CD8-positive, alpha-beta memory T cell (primary cell): ENCODE measurements at regions of chr2 and their contacts with region 1.

Region 1: GRCh38 chr2:7725171-7725849 is 808.1 kb downstream of the RNF144A start:
- DNase-seq: peak; percentile 7 to 82 (median 37)
- H3K4me3 ChIP-seq: peak overlapping the region; percentile 65
- H3K4me3 Mint-ChIP-seq: peak overlapping the region; percentile 84 to 93 (median 89)
- H3K27ac ChIP-seq: peak overlapping the region; percentile 47
- H3K27ac Mint-ChIP-seq: peak overlapping the region; percentile 90 to 99 (median 96)
- H3K4me1 ChIP-seq: peaks cover 35% of the 10 kb centered on the region
- H3K4me1 Mint-ChIP-seq: peaks cover 69 to 88% (median 78%) of the 10 kb centered on the region in 3 donors
- H3K27me3 ChIP-seq: no peaks in the 10 kb centered on the region
- H3K27me3 Mint-ChIP-seq: no peaks in the 10 kb centered on the region

Region 2: DNA sequence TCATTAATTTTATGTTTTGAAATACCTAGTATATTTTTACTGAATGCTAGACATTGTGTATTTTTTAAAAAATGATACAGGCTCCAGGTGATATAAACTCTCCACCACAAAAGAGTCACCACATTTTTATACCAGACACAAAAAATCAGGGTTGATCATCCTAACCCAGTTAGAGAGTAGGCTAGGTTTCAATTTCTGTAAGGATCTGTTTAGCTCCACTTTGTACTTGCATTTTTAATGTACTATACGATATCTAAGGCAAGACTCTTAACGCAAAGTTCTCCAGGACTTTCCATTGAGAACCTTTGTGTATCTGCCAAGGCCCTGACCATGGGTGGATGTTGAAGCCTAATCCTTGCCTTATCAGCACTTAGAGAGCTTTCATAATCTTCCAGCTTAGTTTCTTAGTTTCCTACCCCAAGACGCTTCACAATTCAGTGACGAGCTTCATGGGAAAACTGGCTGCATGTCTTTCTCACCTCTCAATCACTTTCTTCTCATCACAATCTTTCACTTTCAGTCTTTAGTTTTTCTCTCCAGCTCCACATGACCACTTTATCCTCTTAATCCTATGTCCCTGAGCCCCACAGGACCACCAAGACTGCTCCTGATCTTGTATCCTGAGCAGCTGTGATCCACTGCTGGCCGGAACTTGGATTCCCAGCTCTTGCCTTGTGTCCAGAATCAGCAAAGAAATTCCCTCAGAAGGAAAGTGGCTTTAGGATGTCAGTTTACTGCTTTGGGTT is 172.3 kb before region 1 on chr2:
- CTCF ChIA-PET with region 1: no interaction called
- POLR2A ChIA-PET with region 1: no interaction called
- DNase-seq: no peak
- H3K4me3 ChIP-seq: peak overlapping the region; percentile 38
- H3K4me3 Mint-ChIP-seq: peak overlapping the region; percentile 13 to 72 (median 44)
- H3K27ac ChIP-seq: no peak overlapping the region
- H3K27ac Mint-ChIP-seq: peak overlapping the region in 6 of 8 donors; percentile 5 to 84 (median 46)
- H3K4me1 ChIP-seq: no peaks in the 10 kb centered on the region
- H3K4me1 Mint-ChIP-seq: peaks cover 12% of the 10 kb centered on the region in 3 donors
- H3K27me3 ChIP-seq: no peaks in the 10 kb centered on the region
- H3K27me3 Mint-ChIP-seq: no peaks in the 10 kb centered on the region

Region 3: GRCh38 chr2:7567646-7568045 is 157.7 kb before region 1 on chr2:
- CTCF ChIA-PET with region 1: interaction called, 20 read pairs
- POLR2A ChIA-PET with region 1: interaction called, 7 read pairs
- DNase-seq: peak in 4 of 5 donors; percentile 2 to 83 (median 71)
- H3K4me3 ChIP-seq: peak overlapping the region; percentile 11
- H3K4me3 Mint-ChIP-seq: peak overlapping the region in 6 of 7 donors; percentile 24 to 79 (median 64)
- H3K27ac ChIP-seq: no peak overlapping the region
- H3K27ac Mint-ChIP-seq: peak overlapping the region; percentile 55 to 96 (median 86)
- H3K4me1 ChIP-seq: peaks cover 48% of the 10 kb centered on the region
- H3K4me1 Mint-ChIP-seq: peaks cover 36 to 65% (median 53%) of the 10 kb centered on the region in 3 donors
- H3K27me3 ChIP-seq: no peaks in the 10 kb centered on the region
- H3K27me3 Mint-ChIP-seq: peaks cover 0 to 1% of the 10 kb centered on the region in 2 donors

Region 4: DNA sequence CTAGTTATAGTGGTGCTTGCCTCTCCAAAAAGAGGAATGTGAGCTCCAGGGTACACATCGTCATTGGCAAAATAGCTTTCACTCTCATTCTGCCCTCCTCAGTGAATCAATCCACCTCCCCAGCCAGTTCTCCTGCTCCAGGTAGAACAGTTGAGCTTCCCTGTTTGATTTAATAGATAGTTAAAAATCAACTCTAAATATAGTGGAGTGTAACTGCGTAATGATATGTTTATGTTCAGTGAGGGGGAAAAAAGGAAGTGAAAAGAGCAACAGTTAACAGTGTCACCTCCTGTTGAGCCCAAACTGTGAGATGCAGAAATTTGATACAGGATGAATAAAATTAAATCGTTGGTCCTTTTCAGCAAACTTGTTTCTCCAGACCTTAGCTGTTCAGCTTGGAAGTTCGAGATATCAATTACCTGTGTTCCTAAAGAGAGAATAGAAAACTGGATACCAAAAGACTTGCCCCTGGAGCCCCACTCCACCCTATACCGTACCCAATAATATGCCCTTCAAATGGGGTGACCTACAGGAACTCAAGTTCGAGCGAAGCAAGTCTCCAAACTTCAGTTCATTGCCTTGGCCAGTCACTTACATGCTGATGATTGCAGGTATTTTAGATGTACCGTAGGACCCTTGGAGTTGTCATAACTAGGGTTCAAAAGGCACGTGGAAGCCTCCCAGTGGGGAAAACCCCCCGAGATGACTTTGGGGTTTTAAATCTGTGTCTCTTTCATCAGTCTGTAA is 99.7 kb before region 1 on chr2:
- CTCF ChIA-PET with region 1: no interaction called
- POLR2A ChIA-PET with region 1: no interaction called
- DNase-seq: no peak
- H3K4me3 ChIP-seq: no peak overlapping the region
- H3K4me3 Mint-ChIP-seq: no peak overlapping the region
- H3K27ac ChIP-seq: no peak overlapping the region
- H3K27ac Mint-ChIP-seq: no peak overlapping the region
- H3K4me1 ChIP-seq: no peaks in the 10 kb centered on the region
- H3K4me1 Mint-ChIP-seq: no peaks in the 10 kb centered on the region
- H3K27me3 ChIP-seq: no peaks in the 10 kb centered on the region
- H3K27me3 Mint-ChIP-seq: peaks cover 0 to 2% of the 10 kb centered on the region in 2 donors

Region 5: DNA sequence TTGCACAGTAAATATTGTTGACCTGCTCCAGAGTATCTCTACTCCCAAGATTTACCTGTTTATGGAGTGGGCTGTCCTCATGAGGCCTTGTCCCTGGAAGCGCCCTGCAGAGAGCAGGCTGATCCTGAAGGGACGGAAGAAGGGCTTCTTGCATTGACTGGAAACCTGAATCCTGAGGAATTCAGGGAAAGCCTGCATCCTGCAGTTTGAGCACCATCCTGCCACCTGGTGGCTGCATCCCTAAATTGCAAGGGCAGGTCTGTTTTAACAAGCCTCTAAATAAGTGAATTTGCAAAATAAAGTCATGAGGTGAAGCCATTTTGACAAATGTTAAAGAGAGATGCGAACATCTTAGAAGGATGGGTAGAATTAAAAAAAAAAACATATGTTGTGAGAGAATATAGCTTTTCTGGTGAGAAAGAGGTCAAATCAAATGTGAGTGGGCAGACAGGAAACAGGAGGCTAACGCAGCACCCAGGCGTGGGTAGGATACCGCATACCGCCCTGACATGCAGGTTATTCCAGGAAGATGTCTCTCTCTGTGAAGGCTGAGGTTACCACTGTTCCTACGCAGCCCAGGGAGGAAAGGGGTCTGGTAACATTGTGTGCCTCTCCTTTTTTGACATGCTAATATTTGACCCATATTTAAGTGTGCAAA is 53.2 kb before region 1 on chr2:
- CTCF ChIA-PET with region 1: interaction called, 10 read pairs
- POLR2A ChIA-PET with region 1: interaction called, 5 read pairs
- DNase-seq: peak; percentile 13 to 63 (median 53)
- H3K4me3 ChIP-seq: peak overlapping the region; percentile 13
- H3K4me3 Mint-ChIP-seq: peak overlapping the region; percentile 1 to 79 (median 70)
- H3K27ac ChIP-seq: no peak overlapping the region
- H3K27ac Mint-ChIP-seq: peak overlapping the region; percentile 43 to 93 (median 89)
- H3K4me1 ChIP-seq: peaks cover 21% of the 10 kb centered on the region
- H3K4me1 Mint-ChIP-seq: peaks cover 26 to 39% (median 32%) of the 10 kb centered on the region in 3 donors
- H3K27me3 ChIP-seq: no peaks in the 10 kb centered on the region
- H3K27me3 Mint-ChIP-seq: no peaks in the 10 kb centered on the region

Region 6: DNA sequence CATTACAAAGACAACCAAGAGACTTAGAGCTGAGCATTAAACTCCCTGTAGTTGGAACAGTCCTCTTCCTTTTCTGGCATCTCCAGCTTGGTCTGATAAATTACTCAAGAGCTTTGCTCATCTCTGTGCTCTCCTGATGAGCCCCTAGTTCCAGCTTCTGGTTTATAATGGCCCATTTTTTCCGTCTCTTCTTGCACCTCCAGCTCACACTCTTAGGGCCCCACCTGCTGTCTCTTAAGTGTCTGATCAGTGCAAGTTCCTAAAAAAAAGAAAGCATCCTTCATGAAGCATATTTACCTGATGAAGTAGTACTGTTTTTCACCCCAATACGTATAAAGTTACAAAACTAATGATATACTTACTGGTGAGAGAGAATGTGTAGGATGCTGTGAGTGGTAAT is 14.8 kb after region 1 on chr2:
- CTCF ChIA-PET with region 1: interaction called, 17 read pairs
- POLR2A ChIA-PET with region 1: interaction called, 13 read pairs
- DNase-seq: no peak
- H3K4me3 ChIP-seq: no peak overlapping the region
- H3K4me3 Mint-ChIP-seq: peak overlapping the region in 2 of 7 donors; percentile 30 to 32
- H3K27ac ChIP-seq: no peak overlapping the region
- H3K27ac Mint-ChIP-seq: peak overlapping the region; percentile 57 to 91 (median 85)
- H3K4me1 ChIP-seq: peaks cover 7% of the 10 kb centered on the region
- H3K4me1 Mint-ChIP-seq: peaks cover 75 to 95% (median 93%) of the 10 kb centered on the region in 3 donors
- H3K27me3 ChIP-seq: no peaks in the 10 kb centered on the region
- H3K27me3 Mint-ChIP-seq: peaks cover 0 to 2% of the 10 kb centered on the region in 2 donors

Region 7: DNA sequence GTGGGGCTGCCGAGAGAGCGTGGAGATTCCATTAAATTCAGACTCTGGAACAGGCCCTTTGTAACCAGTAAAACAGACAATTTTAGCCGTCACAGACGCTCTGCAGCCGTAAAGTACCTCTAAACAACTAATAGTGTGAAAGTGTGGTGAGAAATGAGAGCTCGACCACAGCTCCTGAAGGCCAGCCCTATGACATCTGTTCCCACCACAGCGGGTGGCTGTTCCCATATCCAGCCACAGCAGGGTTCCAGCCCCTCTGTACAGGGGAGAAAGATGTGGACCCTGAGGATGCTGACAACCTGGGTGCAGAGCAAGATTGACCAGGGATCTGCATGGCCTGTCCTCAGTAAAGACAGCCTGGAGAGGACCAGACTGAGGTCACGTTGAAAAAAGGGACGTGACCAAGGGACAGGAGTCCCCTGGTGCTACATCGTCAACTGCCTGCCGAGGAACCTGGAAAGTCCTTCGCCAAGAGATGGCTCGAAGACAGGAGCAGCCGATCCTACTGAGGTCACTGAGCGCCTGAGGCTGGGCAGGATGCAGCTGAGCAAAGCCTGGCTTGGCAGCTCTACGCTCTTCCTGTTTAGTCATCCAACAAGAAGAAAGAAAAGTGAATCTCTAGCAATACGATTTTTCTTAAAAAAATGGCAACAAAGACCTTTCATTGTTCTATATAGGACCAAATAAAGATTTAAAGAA is 23.6 kb after region 1 on chr2:
- CTCF ChIA-PET with region 1: interaction called, 17 read pairs
- POLR2A ChIA-PET with region 1: interaction called, 5 read pairs
- DNase-seq: peak in 4 of 5 donors; percentile 20 to 75 (median 50)
- H3K4me3 ChIP-seq: no peak overlapping the region
- H3K4me3 Mint-ChIP-seq: peak overlapping the region; percentile 63 to 81 (median 72)
- H3K27ac ChIP-seq: peak overlapping the region; percentile 62
- H3K27ac Mint-ChIP-seq: peak overlapping the region; percentile 85 to 99 (median 95)
- H3K4me1 ChIP-seq: peaks cover 17% of the 10 kb centered on the region
- H3K4me1 Mint-ChIP-seq: peaks cover 46 to 53% (median 47%) of the 10 kb centered on the region in 3 donors
- H3K27me3 ChIP-seq: no peaks in the 10 kb centered on the region
- H3K27me3 Mint-ChIP-seq: peaks cover 0 to 1% of the 10 kb centered on the region in 2 donors